B cell (primary cell): ENCODE measurements at regions of chr3 and their contacts with region 1.

Region 1: DNA sequence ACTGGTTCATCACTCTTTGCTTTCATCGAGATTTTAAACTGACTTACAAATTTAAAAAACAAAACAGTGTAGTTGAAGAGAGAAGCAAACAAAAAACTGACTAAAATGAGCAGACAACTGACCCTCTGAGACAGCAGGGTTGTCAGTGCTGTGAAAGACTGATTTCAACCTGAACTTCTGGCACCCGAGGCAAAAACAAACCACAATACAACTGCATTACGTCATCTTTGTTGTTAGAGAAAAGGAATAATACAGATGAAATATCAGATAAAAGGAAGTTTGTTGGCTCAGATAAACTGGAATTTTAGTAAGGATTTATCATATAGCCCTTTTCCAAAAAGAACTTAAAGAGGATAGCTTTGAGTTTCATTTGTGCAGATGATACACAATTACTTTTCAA is 51.1 kb downstream of the PARP15 start:
- DNase-seq: no peak
- ATAC-seq: no peak
- H3K4me3 ChIP-seq: no peak overlapping the region
- H3K4me3 Mint-ChIP-seq: no peak overlapping the region
- H3K27ac ChIP-seq: no peak overlapping the region
- H3K27ac Mint-ChIP-seq: no peak overlapping the region
- H3K4me1 ChIP-seq: peaks cover 3 to 4% of the 10 kb centered on the region in 2 donors
- H3K4me1 Mint-ChIP-seq: peaks cover 12% of the 10 kb centered on the region
- H3K27me3 ChIP-seq: no peaks in the 10 kb centered on the region
- H3K27me3 Mint-ChIP-seq: no peaks in the 10 kb centered on the region
- CTCF ChIP-seq: no peak

Region 2: GRCh38 chr3:122576174-122576940 is 52.2 kb before region 1 on chr3:
- CTCF ChIA-PET with region 1: no interaction called
- POLR2A ChIA-PET with region 1: no interaction called
- intact Hi-C with region 1: no loop called
- DNase-seq: peak; percentile 96
- ATAC-seq: peak; percentile 82
- H3K4me3 ChIP-seq: peak overlapping the region; percentile 10 to 91 (median 82)
- H3K4me3 Mint-ChIP-seq: peak overlapping the region; percentile 72
- H3K27ac ChIP-seq: peak overlapping the region; percentile 95 to 97
- H3K27ac Mint-ChIP-seq: peak overlapping the region; percentile 100
- H3K4me1 ChIP-seq: peaks cover 52 to 63% of the 10 kb centered on the region in 2 donors
- H3K4me1 Mint-ChIP-seq: peaks cover 73% of the 10 kb centered on the region
- H3K27me3 ChIP-seq: no peaks in the 10 kb centered on the region
- H3K27me3 Mint-ChIP-seq: no peaks in the 10 kb centered on the region
- CTCF ChIP-seq: no peak

Region 3: DNA sequence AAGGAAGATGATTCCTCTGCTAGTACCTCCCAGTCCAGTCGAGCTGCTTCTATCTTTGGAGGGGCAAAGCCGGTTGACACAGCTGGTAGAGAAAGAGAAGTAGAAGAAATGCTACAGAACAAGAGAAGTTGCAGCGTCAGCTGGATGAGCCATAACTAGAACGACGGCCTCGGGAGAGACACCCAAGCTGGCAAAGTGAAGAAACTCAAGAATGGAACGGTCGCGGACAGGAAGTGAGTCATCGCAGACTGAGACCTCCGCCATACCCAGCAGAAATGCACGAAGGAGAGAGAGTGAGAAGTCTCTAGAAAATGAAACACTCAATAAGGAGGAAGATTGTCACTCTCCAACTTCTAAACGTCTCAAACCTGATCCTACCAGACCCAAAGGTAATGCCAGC is 33.1 kb after region 1 on chr3:
- CTCF ChIA-PET with region 1: no interaction called
- POLR2A ChIA-PET with region 1: no interaction called
- intact Hi-C with region 1: loop called (anchors 5 kb)
- DNase-seq: no peak
- ATAC-seq: peak; percentile 21
- H3K4me3 ChIP-seq: peak overlapping the region in 1 of 5 experiments; percentile 21
- H3K4me3 Mint-ChIP-seq: peak overlapping the region; percentile 65
- H3K27ac ChIP-seq: no peak overlapping the region
- H3K27ac Mint-ChIP-seq: no peak overlapping the region
- H3K4me1 ChIP-seq: peaks cover 6% of the 10 kb centered on the region in 2 donors
- H3K4me1 Mint-ChIP-seq: peaks cover 12% of the 10 kb centered on the region
- H3K27me3 ChIP-seq: no peaks in the 10 kb centered on the region
- H3K27me3 Mint-ChIP-seq: no peaks in the 10 kb centered on the region
- CTCF ChIP-seq: no peak

Region 4: DNA sequence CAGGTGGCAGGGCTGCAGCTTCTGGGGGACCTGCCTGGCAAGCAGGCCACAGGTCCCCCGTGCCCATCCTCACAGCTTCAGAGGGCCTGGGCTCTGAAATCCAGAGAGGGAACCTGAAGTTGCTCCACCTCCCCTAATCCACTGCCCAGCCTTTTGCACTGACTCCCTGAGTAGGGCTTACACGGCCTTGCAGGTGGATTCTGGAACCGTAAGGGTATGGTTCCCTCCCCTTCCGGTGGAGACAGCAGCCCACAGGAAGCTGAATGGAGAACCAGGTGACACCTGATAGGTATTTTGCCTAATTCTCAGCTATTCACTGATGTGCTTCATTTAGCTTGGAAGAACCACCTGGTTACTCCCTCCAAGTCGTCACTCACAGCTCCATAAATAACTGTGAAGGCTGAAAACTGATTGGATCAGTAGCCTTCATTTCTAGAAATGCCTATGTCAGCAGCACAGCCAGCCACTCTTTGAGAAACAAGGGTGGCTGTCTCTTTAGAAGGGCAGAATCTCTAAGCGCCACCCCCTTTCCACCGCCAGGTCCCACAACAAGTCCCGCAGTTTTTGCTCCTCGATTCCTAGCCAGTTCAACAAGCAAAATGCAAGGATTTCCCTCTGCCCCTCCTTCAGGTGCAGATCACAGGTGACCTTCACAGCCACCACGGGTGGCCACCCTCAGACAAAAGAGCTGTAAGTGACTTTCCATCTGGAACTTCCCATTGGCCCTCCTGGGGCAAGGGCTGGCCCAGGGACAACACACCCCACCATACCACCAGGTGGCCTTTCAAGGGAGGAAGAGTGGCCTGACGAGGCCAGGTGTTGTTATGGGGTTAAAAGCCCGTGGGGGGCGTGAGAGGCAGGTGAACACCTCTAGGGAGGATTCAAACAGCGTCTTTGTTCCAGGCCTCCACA is 686.0 kb after region 1 on chr3:
- CTCF ChIA-PET with region 1: no interaction called
- POLR2A ChIA-PET with region 1: no interaction called
- intact Hi-C with region 1: no loop called
- DNase-seq: no peak
- ATAC-seq: no peak
- H3K4me3 ChIP-seq: no peak overlapping the region
- H3K4me3 Mint-ChIP-seq: no peak overlapping the region
- H3K27ac ChIP-seq: no peak overlapping the region
- H3K27ac Mint-ChIP-seq: no peak overlapping the region
- H3K4me1 ChIP-seq: no peaks in the 10 kb centered on the region
- H3K4me1 Mint-ChIP-seq: no peaks in the 10 kb centered on the region
- H3K27me3 ChIP-seq: peaks cover 0 to 4% (median 0%) of the 10 kb centered on the region in 4 experiments
- H3K27me3 Mint-ChIP-seq: peaks cover 30% of the 10 kb centered on the region
- CTCF ChIP-seq: no peak